ENCODE measurements at regions of chr1 and their contacts with region 1.

Region 1: GRCh38 chr1:206106328-206107167 is 10.6 kb downstream of the AVPR1B start:
- DNase-seq: peak; percentile 88
- ATAC-seq: peak; percentile 90
- H3K4me3 Mint-ChIP-seq: no peak overlapping the region
- H3K27ac Mint-ChIP-seq: no peak overlapping the region
- H3K4me1 Mint-ChIP-seq: no peaks in the 10 kb centered on the region
- H3K27me3 Mint-ChIP-seq: no peaks in the 10 kb centered on the region

Region 2: DNA sequence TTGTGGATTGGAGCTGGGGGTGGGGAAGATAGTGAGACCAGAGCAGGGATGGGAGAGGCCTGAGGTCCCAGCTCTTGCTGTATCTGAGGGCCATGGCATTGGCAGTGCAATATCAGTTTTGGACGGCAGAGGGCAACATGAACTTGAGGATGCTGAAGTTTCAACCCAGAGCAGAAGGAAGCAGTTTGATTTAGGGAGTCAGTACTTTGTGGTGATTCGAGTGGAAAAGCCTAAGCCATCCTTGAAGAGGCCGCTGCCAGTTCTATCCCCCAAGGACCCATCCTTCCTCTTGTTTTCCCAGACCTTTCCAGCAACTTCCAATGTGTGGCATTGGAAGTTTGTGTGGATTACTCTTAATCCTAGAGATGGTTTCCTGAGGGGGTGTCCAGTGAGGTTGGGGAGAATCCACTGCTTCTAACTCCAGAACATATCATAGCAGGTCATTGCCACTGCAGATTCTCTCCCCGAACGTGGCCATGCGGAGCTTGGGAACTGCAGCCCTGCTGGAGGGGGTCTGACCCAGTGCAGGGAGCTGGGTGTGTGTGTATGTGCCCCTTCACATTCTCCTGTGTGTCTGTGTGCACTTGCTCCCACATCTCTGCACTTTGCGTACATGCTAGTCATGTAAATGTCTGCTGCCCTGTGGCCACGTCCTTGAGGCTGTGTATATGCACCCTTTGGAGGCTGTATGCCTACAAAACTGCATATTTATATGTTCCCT is 187.4 kb before region 1 on chr1:
- CTCF ChIA-PET with region 1: interaction called, 16 read pairs
- POLR2A ChIA-PET with region 1: no interaction called
- intact Hi-C with region 1: loop called (anchors 1 kb)
- DNase-seq: peak; percentile 86
- ATAC-seq: peak; percentile 86
- H3K4me3 Mint-ChIP-seq: no peak overlapping the region
- H3K27ac Mint-ChIP-seq: no peak overlapping the region
- H3K4me1 Mint-ChIP-seq: no peaks in the 10 kb centered on the region
- H3K27me3 Mint-ChIP-seq: no peaks in the 10 kb centered on the region

Region 3: GRCh38 chr1:205983925-205984725 is 122.4 kb before region 1 on chr1:
- CTCF ChIA-PET with region 1: interaction called, 79 read pairs
- POLR2A ChIA-PET with region 1: no interaction called
- intact Hi-C with region 1: loop called (anchors 1 kb)
- DNase-seq: peak; percentile 66
- ATAC-seq: peak; percentile 92
- H3K4me3 Mint-ChIP-seq: no peak overlapping the region
- H3K27ac Mint-ChIP-seq: no peak overlapping the region
- H3K4me1 Mint-ChIP-seq: no peaks in the 10 kb centered on the region
- H3K27me3 Mint-ChIP-seq: no peaks in the 10 kb centered on the region

Region 4: GRCh38 chr1:206041640-206042039 is 64.9 kb before region 1 on chr1:
- CTCF ChIA-PET with region 1: interaction called, 15 read pairs
- POLR2A ChIA-PET with region 1: no interaction called
- intact Hi-C with region 1: no loop called
- DNase-seq: no peak
- ATAC-seq: no peak
- H3K4me3 Mint-ChIP-seq: no peak overlapping the region
- H3K27ac Mint-ChIP-seq: no peak overlapping the region
- H3K4me1 Mint-ChIP-seq: peaks cover 16% of the 10 kb centered on the region
- H3K27me3 Mint-ChIP-seq: peaks cover 7% of the 10 kb centered on the region

Region 5: GRCh38 chr1:206094024-206094423 is 12.5 kb before region 1 on chr1:
- CTCF ChIA-PET with region 1: interaction called, 14 read pairs
- POLR2A ChIA-PET with region 1: no interaction called
- intact Hi-C with region 1: no loop called
- DNase-seq: no peak
- ATAC-seq: no peak
- H3K4me3 Mint-ChIP-seq: no peak overlapping the region
- H3K27ac Mint-ChIP-seq: no peak overlapping the region
- H3K4me1 Mint-ChIP-seq: no peaks in the 10 kb centered on the region
- H3K27me3 Mint-ChIP-seq: peaks cover 5% of the 10 kb centered on the region